Activated B cell treated with CpG ODN at 0.5 μM for 24 hours (primary cell): ENCODE measurements at regions of chr16 and their contacts with region 1.

Region 1: DNA sequence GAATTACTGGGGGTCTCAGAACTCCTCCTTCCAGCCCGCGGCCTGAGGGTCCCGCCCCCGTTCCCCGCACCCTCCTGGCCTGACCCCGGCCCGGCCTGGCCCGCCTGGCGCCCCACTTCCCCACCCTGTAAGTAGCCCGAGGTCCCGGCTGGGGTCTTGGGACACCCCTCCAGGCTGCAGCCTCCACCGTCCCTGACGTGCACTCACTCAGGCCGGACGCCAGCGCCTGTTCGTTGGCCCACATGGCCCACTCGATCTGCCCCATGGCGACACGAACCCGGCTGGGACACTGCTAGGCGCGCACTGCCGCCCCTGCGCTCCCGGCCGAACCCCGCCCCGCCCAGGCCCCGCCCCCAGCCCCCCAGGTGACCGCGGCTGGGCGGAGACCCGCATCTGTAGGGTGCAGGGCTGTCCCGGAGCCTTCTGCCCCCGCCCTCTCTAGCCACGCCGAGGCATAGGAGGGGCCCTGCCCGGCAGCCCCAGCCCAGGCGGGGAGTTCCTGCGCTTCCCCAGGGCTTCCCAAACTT is at the start of gene CYBA:
- DNase-seq: no peak
- ATAC-seq: peak; percentile 81
- H3K4me3 Mint-ChIP-seq: peak within 1 kb of the TSS; percentile 93
- H3K27ac Mint-ChIP-seq: peak within 1 kb of the TSS; percentile 93
- H3K4me1 Mint-ChIP-seq: peaks cover 50% of the 10 kb centered on the region
- H3K27me3 Mint-ChIP-seq: no peaks in the 10 kb centered on the region
- CTCF ChIP-seq: no peak
- total RNA-seq, gene CYBA: 432 and 456 TPM in 2 replicates

Region 2: GRCh38 chr16:88569985-88570690 is 80.7 kb before region 1 on chr16 and contains the start of gene ZC3H18:
- CTCF ChIA-PET with region 1: no interaction called
- POLR2A ChIA-PET with region 1: interaction called, 6 read pairs
- intact Hi-C with region 1: loop called (anchors 1 kb)
- DNase-seq: peak; percentile 99
- ATAC-seq: peak; percentile 92
- H3K4me3 Mint-ChIP-seq: peak within 1 kb of the TSS; percentile 86
- H3K27ac Mint-ChIP-seq: peak within 1 kb of the TSS; percentile 76
- H3K4me1 Mint-ChIP-seq: peaks cover 25% of the 10 kb centered on the region
- H3K27me3 Mint-ChIP-seq: no peaks in the 10 kb centered on the region
- CTCF ChIP-seq: no peak
- total RNA-seq, gene ZC3H18: 61.7 and 74.2 TPM in 2 replicates

Region 3: GRCh38 chr16:88662843-88663606 is 12.2 kb after region 1 on chr16 and contains the start of gene MVD:
- CTCF ChIA-PET with region 1: no interaction called
- POLR2A ChIA-PET with region 1: interaction called, 31 read pairs
- intact Hi-C with region 1: loop called (anchors 1 kb)
- DNase-seq: peak; percentile 89
- ATAC-seq: peak; percentile 94
- H3K4me3 Mint-ChIP-seq: peak within 1 kb of the TSS; percentile 94
- H3K27ac Mint-ChIP-seq: peak within 1 kb of the TSS; percentile 90
- H3K4me1 Mint-ChIP-seq: peaks cover 31% of the 10 kb centered on the region
- H3K27me3 Mint-ChIP-seq: no peaks in the 10 kb centered on the region
- CTCF ChIP-seq: no peak
- total RNA-seq, gene MVD: 115 and 140 TPM in 2 replicates

Region 4: GRCh38 chr16:88706288-88706964 is 55.6 kb after region 1 on chr16 and contains the starts of genes CTU2 and RNF166:
- CTCF ChIA-PET with region 1: interaction called, 3 read pairs
- POLR2A ChIA-PET with region 1: interaction called, 49 read pairs
- intact Hi-C with region 1: loop called (anchors 1 kb)
- DNase-seq: peak; percentile 95
- ATAC-seq: peak; percentile 70
- H3K4me3 Mint-ChIP-seq: peak within 1 kb of the TSS; percentile 87
- H3K27ac Mint-ChIP-seq: peak within 1 kb of the TSS; percentile 85
- H3K4me1 Mint-ChIP-seq: peaks cover 51% of the 10 kb centered on the region
- H3K27me3 Mint-ChIP-seq: no peaks in the 10 kb centered on the region
- CTCF ChIP-seq: no peak
- total RNA-seq, gene CTU2: 28.8 and 36.7 TPM in 2 replicates
- total RNA-seq, gene RNF166: 31.0 and 45.3 TPM in 2 replicates

Region 5: GRCh38 chr16:88967830-88968588 is 317.2 kb after region 1 on chr16:
- CTCF ChIA-PET with region 1: no interaction called
- POLR2A ChIA-PET with region 1: no interaction called
- intact Hi-C with region 1: loop called (anchors 5 kb)
- DNase-seq: peak; percentile 85
- ATAC-seq: peak; percentile 80
- H3K4me3 Mint-ChIP-seq: peak overlapping the region; percentile 75
- H3K27ac Mint-ChIP-seq: peak overlapping the region; percentile 86
- H3K4me1 Mint-ChIP-seq: peaks cover 86% of the 10 kb centered on the region
- H3K27me3 Mint-ChIP-seq: no peaks in the 10 kb centered on the region
- CTCF ChIP-seq: no peak